HAP-1 (cell line): ENCODE measurements at regions of chr9 and their contacts with region 1.

Region 1: DNA sequence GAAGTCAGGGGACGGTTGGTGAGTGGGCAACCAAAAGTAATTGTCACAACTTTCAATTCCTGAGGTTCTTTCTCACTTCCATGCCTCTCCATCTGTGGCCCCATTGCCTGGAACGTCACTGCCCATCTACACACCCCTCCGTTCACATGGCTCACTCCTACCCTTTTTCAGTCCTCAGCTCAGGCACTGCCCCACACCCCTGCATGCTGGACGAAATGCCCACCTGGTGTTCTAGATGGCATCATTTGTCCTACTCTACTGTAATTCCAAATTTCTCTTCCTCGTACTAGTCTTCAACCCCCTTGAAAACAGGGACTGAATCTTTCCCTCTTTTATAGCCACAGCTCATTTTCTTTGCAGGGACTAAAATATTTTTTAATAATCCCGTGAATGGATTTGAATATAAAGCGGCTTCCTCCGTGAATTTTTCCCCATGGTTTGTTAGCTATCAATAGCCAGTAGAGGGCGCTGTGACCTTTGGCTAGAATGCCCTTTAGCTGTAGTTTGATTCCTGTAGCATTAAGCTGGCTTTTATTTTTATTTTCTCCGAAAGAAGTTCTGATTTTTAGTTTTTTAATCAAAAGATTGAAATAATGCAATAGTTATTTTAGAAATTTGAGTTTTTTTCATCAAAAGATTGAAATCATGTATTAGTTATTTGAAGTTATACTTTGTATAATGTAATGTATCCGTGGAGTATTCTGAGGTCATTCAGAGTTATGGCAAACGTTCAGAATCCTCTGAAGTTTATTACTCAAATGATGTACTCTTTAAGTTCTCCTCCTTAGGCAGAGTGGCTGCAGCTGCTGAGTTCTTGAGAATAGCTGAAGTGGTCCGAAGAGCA is 232.1 kb downstream of the SH3GL2 start:
- DNase-seq: peak; percentile 47 to 71
- H3K4me3 ChIP-seq: no peak overlapping the region
- H3K4me1 ChIP-seq: no peaks in the 10 kb centered on the region
- H3K27me3 ChIP-seq: no peaks in the 10 kb centered on the region; the same call in 1 of the 2 replicates

Region 2: DNA sequence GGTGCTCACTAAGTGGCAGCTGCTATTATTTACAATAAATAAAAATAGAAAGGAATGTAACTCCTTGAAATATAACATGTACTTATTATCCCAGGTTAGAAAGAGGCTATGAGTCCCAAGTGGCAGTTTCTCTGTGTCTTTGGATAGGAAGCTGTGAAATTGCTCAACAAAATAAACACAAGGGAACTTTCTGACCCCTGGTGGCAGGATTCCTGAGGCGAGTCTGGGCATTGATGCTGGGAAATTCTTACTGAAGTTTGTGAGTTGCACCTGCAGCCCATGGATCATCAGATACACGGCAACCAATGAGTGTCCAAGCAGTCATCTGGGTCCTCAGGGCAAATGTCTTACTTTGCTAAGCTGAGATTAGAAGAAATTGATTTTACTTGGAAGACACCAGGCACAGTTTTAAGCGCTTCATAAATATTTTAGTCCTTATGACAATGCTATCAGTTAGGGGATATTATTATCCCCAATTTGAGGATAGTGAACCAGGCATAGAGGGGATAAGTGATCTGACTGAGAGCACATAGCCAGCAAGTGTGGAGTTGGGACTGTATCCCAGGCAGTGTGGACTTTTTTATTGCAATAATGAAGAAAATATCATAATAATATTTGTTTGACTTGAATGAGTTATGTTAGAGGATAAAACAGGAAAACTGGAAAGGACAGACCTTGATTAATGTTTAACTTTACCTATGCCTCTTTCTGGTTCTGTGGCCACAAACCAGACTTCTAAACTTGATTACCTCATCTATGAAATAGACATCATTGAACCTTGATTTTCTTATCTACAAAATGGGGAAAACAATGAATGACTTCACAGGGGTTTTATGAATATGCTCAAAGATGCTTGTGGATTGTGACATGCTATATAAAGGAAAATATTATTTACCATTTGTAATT is 397.5 kb after region 1 on chr9:
- in situ Hi-C with region 1: loop called (anchors 5 kb)
- DNase-seq: peak; percentile 56 to 71
- H3K4me3 ChIP-seq: no peak overlapping the region
- H3K4me1 ChIP-seq: peaks cover 3% of the 10 kb centered on the region; the same call in 1 of the 2 replicates
- H3K27me3 ChIP-seq: no peaks in the 10 kb centered on the region